CD8-positive, alpha-beta memory T cell (primary cell): ENCODE measurements at regions of chr1 and their contacts with region 1.

Region 1: GRCh38 chr1:245807306-245807705 is 652.5 kb downstream of the KIF26B start:
- DNase-seq: no peak
- H3K4me3 ChIP-seq: no peak overlapping the region
- H3K4me3 Mint-ChIP-seq: peak overlapping the region in 4 of 7 donors; percentile 15 to 58 (median 41)
- H3K27ac ChIP-seq: no peak overlapping the region
- H3K27ac Mint-ChIP-seq: peak overlapping the region in 4 of 8 donors; percentile 57 to 84 (median 66)
- H3K4me1 ChIP-seq: no peaks in the 10 kb centered on the region
- H3K4me1 Mint-ChIP-seq: peaks cover 13 to 25% (median 14%) of the 10 kb centered on the region in 3 donors
- H3K27me3 ChIP-seq: no peaks in the 10 kb centered on the region
- H3K27me3 Mint-ChIP-seq: no peaks in the 10 kb centered on the region

Region 2: GRCh38 chr1:245788269-245788668 is 19.0 kb before region 1 on chr1:
- CTCF ChIA-PET with region 1: no interaction called
- POLR2A ChIA-PET with region 1: no interaction called
- DNase-seq: no peak
- H3K4me3 ChIP-seq: no peak overlapping the region
- H3K4me3 Mint-ChIP-seq: no peak overlapping the region
- H3K27ac ChIP-seq: no peak overlapping the region
- H3K27ac Mint-ChIP-seq: peak overlapping the region in 1 of 8 donors; percentile 49
- H3K4me1 ChIP-seq: no peaks in the 10 kb centered on the region
- H3K4me1 Mint-ChIP-seq: no peaks in the 10 kb centered on the region
- H3K27me3 ChIP-seq: no peaks in the 10 kb centered on the region
- H3K27me3 Mint-ChIP-seq: no peaks in the 10 kb centered on the region

Region 3: DNA sequence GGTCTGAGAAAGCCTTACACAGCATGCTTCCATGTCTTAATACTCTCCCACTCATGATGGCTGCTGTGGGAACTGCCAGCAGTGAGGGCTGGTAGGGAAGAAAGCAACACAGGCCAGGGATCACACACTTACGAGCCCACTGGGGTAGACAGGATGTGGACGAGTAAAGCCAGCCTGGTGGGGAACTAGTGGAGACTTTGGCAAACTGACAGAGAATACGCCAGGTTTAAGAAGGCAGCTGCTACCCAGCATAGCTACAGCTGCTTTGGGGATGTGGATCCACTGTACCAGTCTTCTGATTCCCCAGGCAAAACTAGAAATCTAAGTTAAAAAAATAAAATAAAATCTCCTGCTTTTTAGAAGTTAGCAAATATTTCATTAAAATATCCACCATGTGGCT is 35.8 kb after region 1 on chr1:
- CTCF ChIA-PET with region 1: no interaction called
- POLR2A ChIA-PET with region 1: no interaction called
- DNase-seq: no peak
- H3K4me3 ChIP-seq: no peak overlapping the region
- H3K4me3 Mint-ChIP-seq: no peak overlapping the region
- H3K27ac ChIP-seq: no peak overlapping the region
- H3K27ac Mint-ChIP-seq: no peak overlapping the region
- H3K4me1 ChIP-seq: no peaks in the 10 kb centered on the region
- H3K4me1 Mint-ChIP-seq: no peaks in the 10 kb centered on the region
- H3K27me3 ChIP-seq: no peaks in the 10 kb centered on the region
- H3K27me3 Mint-ChIP-seq: no peaks in the 10 kb centered on the region

Region 4: DNA sequence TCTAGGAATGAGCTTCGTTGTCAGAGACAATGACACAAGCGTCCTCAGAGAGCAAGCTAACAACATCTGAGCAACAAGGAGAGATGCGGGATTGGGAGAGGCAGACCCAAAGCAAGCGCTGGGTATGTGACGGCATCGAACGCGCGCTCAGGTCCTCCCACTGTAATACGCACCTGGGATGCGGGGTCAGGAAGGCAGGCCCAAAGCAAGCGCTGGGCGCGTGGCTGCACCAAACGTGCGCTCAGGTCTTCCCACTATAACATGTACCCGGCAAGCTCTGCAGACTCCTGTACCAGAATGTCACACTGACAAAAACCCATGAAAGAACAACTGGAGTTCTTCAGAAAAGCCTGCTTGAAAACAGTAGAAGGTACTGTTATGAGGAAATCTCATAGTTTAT is 46.0 kb after region 1 on chr1:
- CTCF ChIA-PET with region 1: no interaction called
- POLR2A ChIA-PET with region 1: interaction called, 12 read pairs
- DNase-seq: no peak
- H3K4me3 ChIP-seq: no peak overlapping the region
- H3K4me3 Mint-ChIP-seq: no peak overlapping the region
- H3K27ac ChIP-seq: no peak overlapping the region
- H3K27ac Mint-ChIP-seq: no peak overlapping the region
- H3K4me1 ChIP-seq: no peaks in the 10 kb centered on the region
- H3K4me1 Mint-ChIP-seq: no peaks in the 10 kb centered on the region
- H3K27me3 ChIP-seq: no peaks in the 10 kb centered on the region
- H3K27me3 Mint-ChIP-seq: no peaks in the 10 kb centered on the region